ENCODE measurements at regions of chr4 and their contacts with region 1.

Region 1: GRCh38 chr4:85084380-85085094 is 118.0 kb upstream of the WDFY3 start:
- DNase-seq: no peak
- ATAC-seq: peak; percentile 84
- H3K4me3 ChIP-seq: no peak overlapping the region
- H3K27ac ChIP-seq: no peak overlapping the region
- H3K4me1 ChIP-seq: no peaks in the 10 kb centered on the region
- H3K27me3 ChIP-seq: no peaks in the 10 kb centered on the region
- CTCF ChIP-seq: peak; percentile 58 to 60 (median 60)
- EP300 ChIP-seq: no peak
- POLR2A ChIP-seq: no peak
- RAD21 ChIP-seq: peak; percentile 58

Region 2: GRCh38 chr4:84681486-84682274 is 402.9 kb before region 1 on chr4:
- CTCF ChIA-PET with region 1: no interaction called
- POLR2A ChIA-PET with region 1: no interaction called
- RAD21 ChIA-PET with region 1: no interaction called
- SMC1A ChIA-PET with region 1: no interaction called
- in situ Hi-C with region 1: no loop called
- intact Hi-C with region 1: no loop called
- DNase-seq: no peak
- ATAC-seq: no peak
- H3K4me3 ChIP-seq: no peak overlapping the region
- H3K27ac ChIP-seq: no peak overlapping the region
- H3K4me1 ChIP-seq: no peaks in the 10 kb centered on the region
- H3K27me3 ChIP-seq: no peaks in the 10 kb centered on the region; a peak in 1 of 4 replicates
- CTCF ChIP-seq: no peak
- EP300 ChIP-seq: no peak
- POLR2A ChIP-seq: no peak
- RAD21 ChIP-seq: no peak

Region 3: GRCh38 chr4:85067342-85067741 is 17.2 kb before region 1 on chr4:
- CTCF ChIA-PET with region 1: interaction called, 11 read pairs
- POLR2A ChIA-PET with region 1: no interaction called
- RAD21 ChIA-PET with region 1: interaction called, 3 read pairs
- SMC1A ChIA-PET with region 1: interaction called, 3 read pairs
- in situ Hi-C with region 1: no loop called
- intact Hi-C with region 1: no loop called
- DNase-seq: no peak
- ATAC-seq: no peak
- H3K4me3 ChIP-seq: no peak overlapping the region
- H3K27ac ChIP-seq: no peak overlapping the region
- H3K4me1 ChIP-seq: no peaks in the 10 kb centered on the region
- H3K27me3 ChIP-seq: no peaks in the 10 kb centered on the region
- CTCF ChIP-seq: no peak
- EP300 ChIP-seq: no peak
- POLR2A ChIP-seq: no peak
- RAD21 ChIP-seq: no peak

Region 4: GRCh38 chr4:85102606-85103005 is 18.1 kb after region 1 on chr4:
- CTCF ChIA-PET with region 1: interaction called, 13 read pairs
- POLR2A ChIA-PET with region 1: no interaction called
- RAD21 ChIA-PET with region 1: no interaction called
- SMC1A ChIA-PET with region 1: interaction called, 3 read pairs
- in situ Hi-C with region 1: no loop called
- intact Hi-C with region 1: no loop called
- DNase-seq: no peak
- ATAC-seq: no peak
- H3K4me3 ChIP-seq: no peak overlapping the region
- H3K27ac ChIP-seq: no peak overlapping the region
- H3K4me1 ChIP-seq: no peaks in the 10 kb centered on the region
- H3K27me3 ChIP-seq: no peaks in the 10 kb centered on the region
- CTCF ChIP-seq: no peak
- EP300 ChIP-seq: no peak
- POLR2A ChIP-seq: no peak
- RAD21 ChIP-seq: no peak

Region 5: GRCh38 chr4:85228264-85228663 is 143.7 kb after region 1 on chr4:
- CTCF ChIA-PET with region 1: no interaction called
- POLR2A ChIA-PET with region 1: no interaction called
- RAD21 ChIA-PET with region 1: no interaction called
- SMC1A ChIA-PET with region 1: no interaction called
- in situ Hi-C with region 1: no loop called
- intact Hi-C with region 1: no loop called
- DNase-seq: no peak
- ATAC-seq: no peak
- H3K4me3 ChIP-seq: no peak overlapping the region
- H3K27ac ChIP-seq: no peak overlapping the region
- H3K4me1 ChIP-seq: no peaks in the 10 kb centered on the region
- H3K27me3 ChIP-seq: no peaks in the 10 kb centered on the region
- CTCF ChIP-seq: peak; percentile 5 to 39 (median 12); a peak in 2 of 6 replicates
- EP300 ChIP-seq: no peak
- POLR2A ChIP-seq: no peak
- RAD21 ChIP-seq: peak; percentile 43

Region 6: GRCh38 chr4:85370430-85371032 is 286.0 kb after region 1 on chr4:
- CTCF ChIA-PET with region 1: interaction called, 5 read pairs
- POLR2A ChIA-PET with region 1: no interaction called
- RAD21 ChIA-PET with region 1: interaction called, 3 read pairs
- SMC1A ChIA-PET with region 1: interaction called, 5 read pairs
- in situ Hi-C with region 1: no loop called
- intact Hi-C with region 1: loop called (anchors 1 kb)
- DNase-seq: peak; percentile 11
- ATAC-seq: peak; percentile 99
- H3K4me3 ChIP-seq: no peak overlapping the region
- H3K27ac ChIP-seq: no peak overlapping the region
- H3K4me1 ChIP-seq: no peaks in the 10 kb centered on the region
- H3K27me3 ChIP-seq: no peaks in the 10 kb centered on the region
- CTCF ChIP-seq: peak; percentile 61 to 82 (median 68)
- EP300 ChIP-seq: no peak
- POLR2A ChIP-seq: no peak
- RAD21 ChIP-seq: peak; percentile 59